Transverse colon (tissue), 4 donors: ENCODE measurements at regions of chr12 and their contacts with region 1.

Region 1: DNA sequence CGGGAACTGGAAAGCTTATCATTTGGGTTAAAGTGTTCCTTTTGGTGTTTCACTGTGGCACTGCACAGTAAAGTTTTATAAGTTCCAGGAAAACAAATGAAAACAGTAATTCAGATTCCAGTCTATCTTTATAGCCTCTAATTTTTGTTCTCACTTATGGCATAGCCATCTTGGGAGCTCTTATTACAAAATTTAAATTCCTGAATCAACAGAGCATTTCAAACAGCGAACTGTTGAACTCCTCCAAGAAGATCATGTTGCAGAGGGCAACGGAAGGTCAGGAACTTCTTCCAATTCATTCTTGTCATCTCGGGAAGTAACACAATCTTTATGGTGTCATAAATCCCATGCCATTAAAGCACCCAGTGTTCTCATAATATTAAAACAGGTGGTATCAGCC is 229.1 kb downstream of the KCNC2 start:
- DNase-seq: no peak
- H3K4me3 ChIP-seq: no peak overlapping the region
- H3K27ac ChIP-seq: no peak overlapping the region
- H3K4me1 ChIP-seq: peaks cover 0 to 27% (median 0%) of the 10 kb centered on the region in 4 donors
- H3K27me3 ChIP-seq: no peaks in the 10 kb centered on the region
- CTCF ChIP-seq: no peak
- EP300 ChIP-seq: no peak
- POLR2A ChIP-seq: no peak

Region 2: GRCh38 chr12:75011118-75011517 is 30.6 kb after region 1 on chr12:
- in situ Hi-C with region 1: no loop called
- intact Hi-C with region 1: loop called (anchors 2 kb)
- DNase-seq: no peak
- H3K4me3 ChIP-seq: no peak overlapping the region
- H3K27ac ChIP-seq: no peak overlapping the region
- H3K4me1 ChIP-seq: no peaks in the 10 kb centered on the region
- H3K27me3 ChIP-seq: no peaks in the 10 kb centered on the region
- CTCF ChIP-seq: no peak
- EP300 ChIP-seq: no peak
- POLR2A ChIP-seq: no peak